AG04450 (cell line): ENCODE measurements at regions of chr2 and their contacts with region 1.

Region 1: DNA sequence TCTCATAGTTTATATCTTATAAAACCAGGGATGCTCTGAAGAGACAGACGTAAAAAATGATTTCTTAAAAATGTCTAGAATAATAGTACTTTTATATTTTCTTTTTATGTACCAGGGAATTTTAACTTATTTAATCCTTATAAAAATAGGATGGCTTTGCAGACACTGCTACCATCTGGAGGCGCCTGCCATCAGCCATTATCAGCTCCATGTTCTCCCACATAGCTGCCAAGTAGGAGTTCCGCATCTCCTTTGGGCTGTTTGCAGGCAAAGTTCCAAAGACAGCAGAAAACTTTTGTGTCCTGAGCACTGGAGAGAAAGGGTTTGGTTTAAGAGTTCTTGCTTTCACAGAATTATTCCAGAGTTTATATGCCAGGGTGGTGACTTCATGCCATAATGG is 69.2 kb downstream of the MTX2 start:
- DNase-seq: no peak
- H3K4me3 ChIP-seq: no peak overlapping the region
- H3K27ac ChIP-seq: no peak overlapping the region
- H3K27me3 ChIP-seq: no peaks in the 10 kb centered on the region
- CTCF ChIP-seq: no peak

Region 2: DNA sequence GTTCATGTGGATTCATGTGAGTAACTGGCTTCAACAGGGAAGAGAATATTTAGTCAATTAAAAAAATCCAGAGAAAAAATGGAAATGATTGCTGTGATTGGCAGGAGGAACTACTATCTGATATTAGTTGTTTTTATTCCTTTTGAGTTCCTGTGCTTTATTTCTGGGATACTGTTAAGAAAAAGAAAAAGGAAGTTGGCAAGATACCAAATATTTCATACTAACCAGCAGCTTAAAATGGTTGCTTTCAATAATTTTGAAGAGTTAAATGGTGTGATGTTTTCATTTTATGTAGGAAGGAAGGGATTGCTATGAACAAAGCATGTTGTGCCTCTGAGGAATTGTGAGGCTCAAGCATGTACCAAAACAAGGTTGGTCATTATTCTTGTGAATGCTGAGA is 77.3 kb before region 1 on chr2:
- CTCF ChIA-PET with region 1: no interaction called
- POLR2A ChIA-PET with region 1: no interaction called
- DNase-seq: no peak
- H3K4me3 ChIP-seq: no peak overlapping the region
- H3K27ac ChIP-seq: no peak overlapping the region
- H3K27me3 ChIP-seq: peaks cover 3% of the 10 kb centered on the region
- CTCF ChIP-seq: no peak

Region 3: GRCh38 chr2:176285321-176285720 is 53.1 kb before region 1 on chr2:
- CTCF ChIA-PET with region 1: no interaction called
- POLR2A ChIA-PET with region 1: no interaction called
- DNase-seq: no peak
- H3K4me3 ChIP-seq: no peak overlapping the region
- H3K27ac ChIP-seq: no peak overlapping the region
- H3K27me3 ChIP-seq: no peaks in the 10 kb centered on the region
- CTCF ChIP-seq: no peak

Region 4: DNA sequence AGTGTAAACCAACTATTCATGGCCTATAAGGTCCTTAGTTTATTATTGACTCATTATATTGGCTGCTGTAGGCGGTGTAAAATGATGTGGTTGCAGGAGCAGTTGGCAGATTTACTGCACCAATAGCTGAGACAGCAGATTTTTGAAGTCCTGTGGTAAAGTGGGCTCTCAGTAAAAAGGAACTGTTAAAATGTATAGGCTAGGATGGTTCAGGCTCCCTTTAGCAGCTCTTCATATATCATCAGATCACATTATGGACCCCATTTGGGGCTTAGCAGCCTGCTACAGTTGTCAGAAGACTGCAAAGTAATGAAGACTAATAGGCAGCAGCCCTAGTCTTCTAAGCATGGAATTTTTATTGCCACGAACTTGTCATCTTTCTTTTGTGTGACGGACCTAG is 41.3 kb before region 1 on chr2:
- CTCF ChIA-PET with region 1: interaction called, 10 read pairs
- POLR2A ChIA-PET with region 1: no interaction called
- DNase-seq: no peak
- H3K4me3 ChIP-seq: no peak overlapping the region
- H3K27ac ChIP-seq: no peak overlapping the region
- H3K27me3 ChIP-seq: no peaks in the 10 kb centered on the region
- CTCF ChIP-seq: no peak

Region 5: GRCh38 chr2:176419591-176420071 is 81.2 kb after region 1 on chr2:
- CTCF ChIA-PET with region 1: no interaction called
- POLR2A ChIA-PET with region 1: no interaction called
- DNase-seq: peak; percentile 57
- H3K4me3 ChIP-seq: no peak overlapping the region
- H3K27ac ChIP-seq: peak overlapping the region; percentile 96
- H3K27me3 ChIP-seq: no peaks in the 10 kb centered on the region
- CTCF ChIP-seq: no peak

Region 6: DNA sequence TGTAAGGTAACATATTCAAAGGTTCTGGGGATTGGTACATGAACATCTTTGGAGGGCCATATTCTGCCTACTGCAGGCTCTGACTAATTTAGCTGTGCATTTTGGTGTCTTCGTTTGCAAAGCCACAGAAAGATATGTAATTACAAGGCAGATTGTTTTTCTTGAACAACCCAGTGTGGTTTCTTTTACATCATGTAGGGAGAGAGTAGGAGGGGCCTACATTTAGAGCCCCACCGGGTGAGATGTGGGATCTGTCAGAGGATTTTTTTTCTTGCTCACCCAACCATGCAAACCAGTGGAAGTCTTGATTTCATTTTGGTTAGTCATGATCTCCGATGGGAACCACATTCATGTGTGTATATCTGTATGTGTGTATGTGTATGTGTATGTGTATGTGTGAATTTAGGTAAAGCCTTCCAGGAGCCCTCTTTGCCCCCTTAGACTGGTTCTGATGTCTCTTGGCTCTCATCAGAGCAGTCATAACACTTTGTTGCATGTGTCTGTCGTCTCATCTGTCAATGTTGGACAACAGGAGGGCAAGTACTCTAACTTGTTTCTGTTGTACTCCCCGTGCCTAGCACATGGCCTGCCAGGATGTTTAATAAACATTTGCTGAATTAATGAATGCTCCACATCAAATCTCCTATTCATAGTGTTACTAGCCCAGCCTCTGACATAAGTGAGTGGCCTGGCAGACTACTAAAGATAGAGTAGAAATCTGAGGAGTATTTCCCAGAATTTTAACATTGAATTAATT is 170.8 kb after region 1 on chr2:
- CTCF ChIA-PET with region 1: no interaction called
- POLR2A ChIA-PET with region 1: no interaction called
- DNase-seq: no peak
- H3K4me3 ChIP-seq: no peak overlapping the region
- H3K27ac ChIP-seq: no peak overlapping the region
- H3K27me3 ChIP-seq: no peaks in the 10 kb centered on the region
- CTCF ChIP-seq: no peak